Naive thymus-derived CD8-positive, alpha-beta T cell (primary cell): ENCODE measurements at regions of chr1 and their contacts with region 1.

Region 1: GRCh38 chr1:16904560-16905111 is 8.9 kb downstream of the RNU1-2 start:
- DNase-seq: peak in 9 of 10 donors; percentile 86 to 100 (median 100)
- ATAC-seq: peak; percentile 87 to 94
- H3K4me3 Mint-ChIP-seq: no peak overlapping the region
- H3K27ac Mint-ChIP-seq: no peak overlapping the region
- H3K4me1 Mint-ChIP-seq: peaks cover 4 to 40% (median 15%) of the 10 kb centered on the region in 4 donors
- H3K27me3 Mint-ChIP-seq: no peaks in the 10 kb centered on the region

Region 2: GRCh38 chr1:16888860-16889816 is 15.5 kb before region 1 on chr1:
- POLR2A ChIA-PET with region 1: interaction called, 48 read pairs
- DNase-seq: peak in 9 of 10 donors; percentile 23 to 76 (median 49)
- ATAC-seq: peak; percentile 77 to 87
- H3K4me3 Mint-ChIP-seq: peak overlapping the region; percentile 88 to 99 (median 96)
- H3K27ac Mint-ChIP-seq: peak overlapping the region; percentile 86 to 98 (median 96)
- H3K4me1 Mint-ChIP-seq: peaks cover 6 to 26% (median 20%) of the 10 kb centered on the region in 4 donors
- H3K27me3 Mint-ChIP-seq: peaks cover 0 to 2% (median 0%) of the 10 kb centered on the region in 5 donors

Region 3: GRCh38 chr1:16921391-16922185 is 17.0 kb after region 1 on chr1 and contains the start of gene CROCC:
- POLR2A ChIA-PET with region 1: interaction called, 29 read pairs
- DNase-seq: peak in 7 of 10 donors; percentile 30 to 63 (median 45)
- ATAC-seq: peak; percentile 85 to 87
- H3K4me3 Mint-ChIP-seq: peak within 1 kb of the TSS; percentile 67 to 84 (median 75)
- H3K27ac Mint-ChIP-seq: peak within 1 kb of the TSS in 8 of 10 donors; percentile 32 to 89 (median 78)
- H3K4me1 Mint-ChIP-seq: peaks cover 17 to 53% (median 38%) of the 10 kb centered on the region in 4 donors
- H3K27me3 Mint-ChIP-seq: no peaks in the 10 kb centered on the region
- polyA plus RNA-seq, gene CROCC: 1.2 to 5.4 (median 1.3) TPM

Region 4: GRCh38 chr1:16984717-16985116 is 80.1 kb after region 1 on chr1:
- POLR2A ChIA-PET with region 1: no interaction called
- DNase-seq: no peak
- ATAC-seq: no peak
- H3K4me3 Mint-ChIP-seq: no peak overlapping the region
- H3K27ac Mint-ChIP-seq: no peak overlapping the region
- H3K4me1 Mint-ChIP-seq: peaks cover 8 to 13% (median 11%) of the 10 kb centered on the region in 4 donors
- H3K27me3 Mint-ChIP-seq: peaks cover 15 to 34% (median 21%) of the 10 kb centered on the region in 5 donors